ENCODE measurements at regions of chr9 and their contacts with region 1.

Region 1: DNA sequence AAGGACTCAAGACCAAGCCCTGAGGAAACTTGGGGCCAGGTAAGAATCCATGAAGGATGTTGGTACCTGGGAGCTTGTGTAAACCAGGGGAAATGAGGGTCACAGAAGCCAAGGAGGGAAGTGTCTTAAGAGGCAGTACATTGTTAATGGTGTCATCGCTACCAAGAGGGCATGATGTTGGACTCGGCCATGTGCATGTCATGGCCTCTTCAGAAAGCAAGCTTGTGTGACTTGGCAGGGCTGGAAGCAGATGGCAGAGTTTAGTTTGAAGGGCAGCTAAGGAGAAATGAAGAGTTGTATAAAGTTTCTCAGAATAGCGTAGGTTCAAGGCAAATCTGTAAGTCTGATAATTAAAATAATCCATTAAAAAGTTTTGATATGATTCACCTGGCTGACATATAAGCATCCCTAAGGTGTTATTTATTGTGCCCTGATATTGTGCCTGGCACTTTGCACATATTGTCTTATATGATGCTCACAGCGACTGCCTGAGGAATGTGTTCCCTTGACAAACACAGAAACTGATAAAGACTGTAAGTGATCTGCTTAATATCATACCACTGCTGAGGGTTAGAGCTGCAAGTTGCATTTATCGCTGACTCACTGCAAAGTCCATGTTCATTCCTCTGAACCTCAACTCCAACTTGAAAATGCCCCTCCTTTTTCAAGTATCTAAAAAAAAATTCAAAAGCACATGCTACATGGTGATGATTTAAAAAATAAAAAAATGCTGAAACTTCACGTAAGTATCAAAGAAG is 81.3 kb upstream of the PTPN3 start:
- DNase-seq: no peak
- H3K4me3 ChIP-seq: no peak overlapping the region
- H3K27ac ChIP-seq: no peak overlapping the region
- H3K27me3 ChIP-seq: no peaks in the 10 kb centered on the region
- CTCF ChIP-seq: no peak

Region 2: DNA sequence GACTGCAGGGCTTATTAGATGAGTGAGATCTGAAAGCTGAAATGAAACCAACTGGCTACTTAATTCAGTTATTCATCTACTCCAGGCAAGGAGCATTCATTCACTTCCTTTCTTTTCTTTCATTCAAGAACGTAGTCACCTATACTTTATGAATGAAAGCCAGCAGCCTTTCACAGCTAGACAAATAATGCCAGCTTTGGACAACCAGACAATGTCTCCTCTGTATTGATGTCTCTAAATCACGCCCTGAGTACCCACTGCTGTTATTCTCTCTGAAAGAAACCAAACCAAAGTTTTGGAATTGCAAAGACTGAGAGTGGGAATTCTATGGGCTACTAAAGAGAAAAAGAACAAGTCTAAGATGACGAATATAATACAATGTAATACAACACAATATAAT is 39.9 kb after region 1 on chr9:
- intact Hi-C with region 1: loop called in 1 of 2 experiments (anchors 5 kb)
- DNase-seq: no peak
- H3K4me3 ChIP-seq: peak overlapping the region in 1 of 59 donors; percentile 6
- H3K27ac ChIP-seq: no peak overlapping the region
- H3K27me3 ChIP-seq: peaks cover 0 to 3% (median 0%) of the 10 kb centered on the region in 45 donors
- CTCF ChIP-seq: no peak

Region 3: DNA sequence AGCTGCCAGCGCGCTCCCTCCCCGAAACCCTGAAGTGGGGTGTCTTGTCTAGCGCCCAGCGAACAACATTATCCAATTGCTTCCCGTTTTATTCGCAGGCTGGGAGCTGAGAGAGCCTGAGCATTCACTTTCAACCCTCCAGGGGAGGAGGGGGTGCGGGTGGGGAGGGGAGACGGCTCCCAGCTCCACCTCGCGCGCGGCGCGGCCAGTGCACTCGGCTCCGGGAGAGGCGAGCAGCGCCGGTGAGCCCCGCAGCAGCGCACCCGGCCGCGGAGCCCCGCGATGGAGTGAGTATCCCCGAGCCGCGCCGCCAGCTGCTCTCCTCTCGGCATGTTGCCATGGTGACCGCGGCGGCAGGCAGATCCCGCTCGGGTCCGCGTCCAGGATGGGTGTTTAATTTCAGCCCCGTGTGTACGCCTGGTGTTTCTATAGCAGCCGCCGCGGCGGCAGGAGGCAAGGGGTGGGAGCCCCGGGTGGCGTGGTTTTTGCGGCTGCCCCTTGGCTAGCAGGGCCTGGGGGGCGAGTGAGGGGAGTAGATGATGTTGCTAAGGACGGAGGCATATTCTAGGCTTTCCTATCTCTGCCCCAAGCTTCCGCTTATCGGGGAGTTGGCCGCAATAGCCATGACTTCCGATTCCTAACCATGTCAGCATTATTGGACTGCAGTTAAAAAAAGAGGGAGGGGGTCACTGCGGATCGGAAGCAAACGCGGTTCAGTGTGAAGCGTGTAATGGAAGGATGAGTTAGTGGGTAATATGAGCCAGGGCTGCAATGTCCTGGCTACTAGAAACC is 61.4 kb after region 1 on chr9:
- intact Hi-C with region 1: loop called in 1 of 2 experiments (anchors 5 kb)
- DNase-seq: peak; percentile 33 to 89 (median 77)
- H3K4me3 ChIP-seq: peak overlapping the region; percentile 34 to 88 (median 72)
- H3K27ac ChIP-seq: peak overlapping the region; percentile 4 to 98 (median 95)
- H3K27me3 ChIP-seq: peaks cover 0 to 11% (median 0%) of the 10 kb centered on the region in 45 donors
- CTCF ChIP-seq: peak in 7 of 56 donors; percentile 4 to 27 (median 12)

Region 4: GRCh38 chr9:109903515-109904138 is 324.3 kb after region 1 on chr9:
- intact Hi-C with region 1: loop called in 1 of 2 experiments (anchors 5 kb)
- DNase-seq: peak in 5 of 10 donors; percentile 34 to 70 (median 53)
- H3K4me3 ChIP-seq: no peak overlapping the region
- H3K27ac ChIP-seq: peak overlapping the region in 11 of 59 donors; percentile 2 to 57 (median 25)
- H3K27me3 ChIP-seq: no peaks in the 10 kb centered on the region
- CTCF ChIP-seq: peak; percentile 54 to 94 (median 82)

Measured in dorsolateral prefrontal cortex (tissue), 120 donors.